Natural killer cell (primary cell): ENCODE measurements at regions of chr22 and their contacts with region 1.

Region 1: GRCh38 chr22:28810821-28811491 is 10.6 kb upstream of the XBP1 start:
- DNase-seq: peak; percentile 36 to 72
- ATAC-seq: peak; percentile 17 to 46 (median 27)
- H3K4me3 ChIP-seq: peak overlapping the region; percentile 13
- H3K4me3 Mint-ChIP-seq: peak overlapping the region; percentile 90
- H3K27ac ChIP-seq: peak overlapping the region; percentile 57
- H3K27ac Mint-ChIP-seq: peak overlapping the region; percentile 91 to 93
- H3K4me1 ChIP-seq: peaks cover 68% of the 10 kb centered on the region
- H3K4me1 Mint-ChIP-seq: peaks cover 69 to 72% of the 10 kb centered on the region in 2 donors
- H3K27me3 ChIP-seq: no peaks in the 10 kb centered on the region
- H3K27me3 Mint-ChIP-seq: no peaks in the 10 kb centered on the region
- CTCF ChIP-seq: no peak

Region 2: GRCh38 chr22:28674121-28674563 is 136.8 kb before region 1 on chr22:
- intact Hi-C with region 1: loop called (anchors 5 kb)
- DNase-seq: peak in 1 of 2 donors; percentile 83
- ATAC-seq: peak; percentile 80 to 98 (median 91)
- H3K4me3 ChIP-seq: no peak overlapping the region
- H3K4me3 Mint-ChIP-seq: peak overlapping the region; percentile 92
- H3K27ac ChIP-seq: no peak overlapping the region
- H3K27ac Mint-ChIP-seq: peak overlapping the region; percentile 96 to 97
- H3K4me1 ChIP-seq: peaks cover 15% of the 10 kb centered on the region
- H3K4me1 Mint-ChIP-seq: peaks cover 26 to 28% of the 10 kb centered on the region in 2 donors
- H3K27me3 ChIP-seq: peaks cover 55% of the 10 kb centered on the region
- H3K27me3 Mint-ChIP-seq: peaks cover 41 to 60% of the 10 kb centered on the region in 2 donors
- CTCF ChIP-seq: no peak

Region 3: DNA sequence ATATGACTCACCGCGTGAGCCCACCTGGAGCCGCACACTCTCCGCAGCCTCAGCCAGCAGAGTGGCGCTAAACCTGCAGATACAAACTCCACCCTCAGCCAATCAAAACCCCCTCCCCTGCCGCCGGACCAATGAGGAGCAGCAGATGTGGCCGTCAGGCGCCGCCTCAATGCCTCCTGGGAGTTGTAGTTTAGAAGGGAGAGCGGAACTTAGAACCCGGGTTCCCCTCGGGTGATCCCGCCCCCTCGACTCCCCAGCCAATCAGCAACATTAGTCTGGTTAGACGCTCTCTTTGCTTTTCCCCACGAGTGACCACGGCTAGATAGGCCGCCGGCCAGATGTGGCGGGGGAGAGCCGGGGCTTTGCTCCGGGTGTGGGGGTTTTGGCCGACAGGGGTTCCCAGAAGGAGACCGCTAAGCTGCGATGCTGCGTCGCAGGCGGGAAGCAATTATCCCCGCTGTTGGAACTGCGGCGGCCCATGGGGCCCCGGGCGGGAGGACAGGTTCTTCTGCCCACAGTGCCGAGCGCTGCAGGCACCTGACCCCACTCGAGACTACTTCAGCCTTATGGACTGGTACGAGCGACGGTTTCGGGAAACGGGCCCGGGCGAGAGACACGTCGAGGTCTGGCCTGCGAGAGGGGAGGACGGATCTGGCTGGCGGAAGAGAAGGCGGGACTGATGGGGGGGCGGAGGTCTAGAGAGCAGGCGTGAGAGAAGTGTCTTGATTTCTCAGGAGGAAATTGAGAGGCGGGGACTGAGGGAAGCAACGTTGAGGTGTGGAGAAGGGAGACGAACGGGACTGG is 69.0 kb before region 1 on chr22 and contains the starts of genes CHEK2 and HSCB:
- intact Hi-C with region 1: loop called (anchors 5 kb)
- DNase-seq: peak; percentile 91 to 98
- ATAC-seq: peak; percentile 94 to 98 (median 95)
- H3K4me3 ChIP-seq: peak within 1 kb of the TSS; percentile 74
- H3K4me3 Mint-ChIP-seq: peak within 1 kb of the TSS; percentile 89
- H3K27ac ChIP-seq: peak within 1 kb of the TSS; percentile 91
- H3K27ac Mint-ChIP-seq: peak within 1 kb of the TSS; percentile 92 to 97
- H3K4me1 ChIP-seq: peaks cover 22% of the 10 kb centered on the region
- H3K4me1 Mint-ChIP-seq: peaks cover 32 to 33% of the 10 kb centered on the region in 2 donors
- H3K27me3 ChIP-seq: no peaks in the 10 kb centered on the region
- H3K27me3 Mint-ChIP-seq: no peaks in the 10 kb centered on the region
- CTCF ChIP-seq: no peak
- total RNA-seq, gene CHEK2: 10.4 to 11.8 (median 11.4) TPM
- total RNA-seq, gene HSCB: 11.4 to 13.6 (median 12.3) TPM

Region 4: DNA sequence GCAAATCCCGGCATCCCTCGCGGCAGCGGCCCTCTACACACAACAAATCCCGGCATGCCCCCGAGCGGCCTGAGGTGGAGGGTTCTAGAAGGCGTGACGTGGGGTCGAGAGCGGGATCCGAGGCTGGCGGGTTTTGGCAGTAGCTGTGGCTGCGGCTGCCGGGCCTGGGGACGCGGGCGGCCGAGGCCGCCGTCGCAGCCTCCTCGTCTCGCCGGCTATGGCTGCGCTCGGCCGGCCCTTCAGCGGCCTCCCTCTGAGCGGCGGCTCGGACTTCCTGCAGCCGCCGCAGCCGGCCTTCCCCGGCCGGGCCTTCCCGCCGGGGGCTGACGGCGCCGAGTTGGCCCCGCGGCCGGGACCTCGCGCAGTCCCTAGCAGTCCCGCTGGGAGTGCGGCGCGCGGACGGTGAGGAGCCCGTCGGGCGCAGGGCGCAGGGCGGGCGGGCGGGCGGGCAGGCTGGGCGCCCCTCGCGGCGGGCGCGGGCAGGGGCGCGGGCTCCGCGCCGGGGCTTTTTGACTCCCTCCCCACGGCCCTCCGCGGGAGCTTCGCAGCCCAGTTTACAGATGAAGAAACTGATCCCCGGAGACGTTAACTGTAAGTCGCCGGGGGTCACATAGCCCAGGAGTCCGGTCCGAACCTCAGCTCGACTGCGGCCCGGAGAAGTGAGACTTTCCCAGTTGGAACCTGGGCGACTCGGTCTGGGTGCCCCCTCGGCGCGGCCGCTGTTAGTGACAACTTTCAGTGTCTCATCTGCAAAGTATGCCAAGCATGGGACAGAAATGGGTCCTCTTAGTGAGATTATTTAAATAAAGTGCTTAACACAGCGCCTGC is 38.1 kb before region 1 on chr22 and contains the start of gene CCDC117:
- intact Hi-C with region 1: loop called (anchors 2 kb)
- DNase-seq: peak; percentile 89 to 95
- ATAC-seq: peak; percentile 90 to 97 (median 93)
- H3K4me3 ChIP-seq: peak within 1 kb of the TSS; percentile 55
- H3K4me3 Mint-ChIP-seq: peak within 1 kb of the TSS; percentile 98
- H3K27ac ChIP-seq: peak within 1 kb of the TSS; percentile 82
- H3K27ac Mint-ChIP-seq: peak within 1 kb of the TSS; percentile 96
- H3K4me1 ChIP-seq: peaks cover 30% of the 10 kb centered on the region
- H3K4me1 Mint-ChIP-seq: peaks cover 20 to 25% of the 10 kb centered on the region in 2 donors
- H3K27me3 ChIP-seq: no peaks in the 10 kb centered on the region
- H3K27me3 Mint-ChIP-seq: no peaks in the 10 kb centered on the region
- CTCF ChIP-seq: peak; percentile 32
- total RNA-seq, gene CCDC117: 26.3 to 26.9 (median 26.6) TPM

Region 5: DNA sequence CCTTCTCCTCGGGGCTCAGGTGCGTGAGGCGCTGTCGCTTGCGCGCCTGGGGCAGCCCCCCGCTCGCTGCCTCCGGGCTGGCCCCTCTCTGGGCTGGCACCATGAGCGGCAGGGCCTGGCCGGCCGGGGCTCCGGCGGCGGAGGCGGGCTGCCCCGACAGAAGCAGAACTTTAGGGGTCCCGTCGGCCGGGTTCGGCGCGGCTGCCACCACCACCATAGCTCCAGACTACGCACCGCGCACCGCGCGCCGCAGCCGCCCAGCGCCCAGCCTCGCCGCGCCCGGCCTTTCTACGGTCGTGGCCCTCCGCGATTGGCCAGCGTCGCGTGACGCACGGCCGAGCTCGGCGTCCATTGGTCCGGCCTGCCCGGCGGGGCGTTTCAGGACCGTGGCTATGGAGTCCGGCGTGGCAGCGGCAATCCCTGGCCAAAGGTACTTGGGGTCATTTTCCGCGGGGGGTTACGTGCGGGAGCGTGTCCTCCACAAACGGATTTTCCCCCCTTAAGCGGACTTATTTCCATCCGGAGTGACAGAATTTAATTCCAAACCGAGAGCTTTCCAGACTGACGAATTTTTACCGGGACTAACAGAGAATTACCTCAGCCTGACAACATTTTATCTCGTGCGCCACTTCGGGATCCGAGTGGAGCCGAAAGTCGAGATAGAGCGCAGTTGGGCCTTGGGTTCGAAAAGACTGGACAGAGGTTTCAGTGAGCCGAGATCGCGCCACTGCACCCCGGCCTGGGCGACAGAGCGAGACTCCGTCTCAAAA is 10.5 kb before region 1 on chr22 and contains the start of gene XBP1:
- intact Hi-C with region 1: loop called (anchors 1 kb)
- DNase-seq: peak; percentile 95 to 97
- ATAC-seq: peak; percentile 83 to 95 (median 92)
- H3K4me3 ChIP-seq: peak within 1 kb of the TSS; percentile 69
- H3K4me3 Mint-ChIP-seq: peak within 1 kb of the TSS; percentile 93
- H3K27ac ChIP-seq: peak within 1 kb of the TSS; percentile 92
- H3K27ac Mint-ChIP-seq: peak within 1 kb of the TSS; percentile 92 to 96
- H3K4me1 ChIP-seq: peaks cover 40% of the 10 kb centered on the region
- H3K4me1 Mint-ChIP-seq: peaks cover 56 to 58% of the 10 kb centered on the region in 2 donors
- H3K27me3 ChIP-seq: no peaks in the 10 kb centered on the region
- H3K27me3 Mint-ChIP-seq: no peaks in the 10 kb centered on the region
- CTCF ChIP-seq: no peak
- total RNA-seq, gene XBP1: 221 to 240 (median 224) TPM